Head of caudate nucleus (tissue), 42 donors: ENCODE measurements at regions of chr12 and their contacts with region 1.

Region 1: DNA sequence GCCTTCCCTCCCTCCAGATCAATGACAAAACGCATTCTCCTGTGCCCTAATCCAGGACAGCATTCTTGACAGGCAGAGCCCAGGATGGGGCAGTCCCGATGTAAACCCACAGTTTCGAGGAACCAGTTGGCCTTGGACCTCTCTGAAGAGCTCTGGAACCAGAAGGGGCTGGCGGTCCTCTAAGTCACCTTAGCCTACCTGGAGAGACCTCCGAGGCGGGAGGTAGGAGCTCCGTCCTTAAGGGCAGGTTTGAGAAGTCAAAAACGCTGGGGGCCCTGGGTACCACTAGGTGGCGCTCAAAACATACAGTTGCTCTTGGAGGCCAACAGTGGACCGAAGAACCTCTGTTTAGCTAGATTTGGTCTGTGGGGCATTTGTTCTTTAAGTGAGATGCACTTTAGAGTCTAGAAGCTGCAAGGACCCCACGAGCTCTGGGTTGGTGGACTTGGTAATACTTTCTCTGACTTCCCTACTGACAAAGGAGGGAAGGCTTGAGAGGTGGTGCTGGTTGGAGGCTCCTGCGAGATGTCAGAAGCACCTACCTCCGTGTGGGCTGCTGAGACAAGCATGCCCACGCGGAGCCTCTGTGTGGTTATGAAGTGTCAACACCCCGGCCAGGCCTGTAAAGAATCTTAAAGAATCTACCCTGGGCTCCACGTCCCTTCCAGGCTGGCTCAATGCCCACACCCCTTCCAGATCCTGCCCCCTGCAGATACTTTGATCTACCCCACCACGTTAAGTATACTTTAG is 74.8 kb upstream of the CHST11 start:
- DNase-seq: peak; percentile 67 to 93 (median 83)

Region 2: GRCh38 chr12:104276273-104277131 is 105.4 kb before region 1 on chr12:
- intact Hi-C with region 1: no loop called
- DNase-seq: peak in 2 of 42 donors; percentile 37 to 45

Region 3: DNA sequence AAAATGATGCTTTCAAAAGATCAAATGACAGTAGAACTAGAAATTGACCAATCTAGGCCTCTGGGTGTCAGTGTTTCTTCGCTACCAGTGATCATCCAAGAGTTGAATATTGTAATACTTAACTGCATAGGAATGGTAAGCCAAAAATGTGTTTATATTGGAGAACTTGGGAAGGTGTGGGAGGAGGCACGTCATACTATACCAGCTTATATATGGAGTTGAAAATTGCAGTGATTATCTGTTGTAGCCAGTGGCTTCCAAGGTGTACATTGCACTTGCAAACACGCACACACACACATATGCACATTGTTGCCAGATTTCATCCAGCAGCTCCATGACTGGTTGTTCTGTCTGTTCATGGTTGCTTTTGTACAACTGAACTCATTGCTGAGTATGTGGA is 42.2 kb before region 1 on chr12:
- intact Hi-C with region 1: no loop called
- DNase-seq: peak in 5 of 42 donors; percentile 18 to 39 (median 26)

Region 4: GRCh38 chr12:104870797-104871196 is 488.9 kb after region 1 on chr12:
- intact Hi-C with region 1: loop called (anchors 5 kb)
- DNase-seq: no peak

Region 5: DNA sequence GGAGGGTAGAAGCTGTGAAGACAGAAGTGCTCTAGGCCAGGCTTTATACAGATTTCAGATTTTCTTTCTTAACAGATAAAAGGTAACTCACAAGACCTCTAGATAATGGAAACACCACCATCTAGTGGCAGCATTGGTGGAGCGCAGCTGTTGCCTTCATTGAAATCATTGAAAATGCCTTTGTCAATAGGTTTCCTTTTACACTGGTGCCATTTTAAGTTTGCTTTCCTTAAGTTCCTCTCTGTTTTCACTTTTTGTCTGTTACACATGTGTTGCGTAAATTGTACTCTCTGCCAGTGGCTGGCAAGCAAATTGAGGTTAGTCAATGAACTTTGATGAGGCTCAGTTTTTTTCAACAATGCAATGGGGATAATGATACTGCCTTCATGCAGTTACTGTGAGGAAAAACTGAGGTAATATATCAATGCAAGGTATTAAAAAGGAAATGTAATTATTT is 671.2 kb after region 1 on chr12:
- intact Hi-C with region 1: loop called (anchors 10 kb)
- DNase-seq: peak; percentile 12 to 93 (median 78)